Mucosa of descending colon (tissue), 3 donors: ENCODE measurements at regions of chr7 and their contacts with region 1.

Region 1: DNA sequence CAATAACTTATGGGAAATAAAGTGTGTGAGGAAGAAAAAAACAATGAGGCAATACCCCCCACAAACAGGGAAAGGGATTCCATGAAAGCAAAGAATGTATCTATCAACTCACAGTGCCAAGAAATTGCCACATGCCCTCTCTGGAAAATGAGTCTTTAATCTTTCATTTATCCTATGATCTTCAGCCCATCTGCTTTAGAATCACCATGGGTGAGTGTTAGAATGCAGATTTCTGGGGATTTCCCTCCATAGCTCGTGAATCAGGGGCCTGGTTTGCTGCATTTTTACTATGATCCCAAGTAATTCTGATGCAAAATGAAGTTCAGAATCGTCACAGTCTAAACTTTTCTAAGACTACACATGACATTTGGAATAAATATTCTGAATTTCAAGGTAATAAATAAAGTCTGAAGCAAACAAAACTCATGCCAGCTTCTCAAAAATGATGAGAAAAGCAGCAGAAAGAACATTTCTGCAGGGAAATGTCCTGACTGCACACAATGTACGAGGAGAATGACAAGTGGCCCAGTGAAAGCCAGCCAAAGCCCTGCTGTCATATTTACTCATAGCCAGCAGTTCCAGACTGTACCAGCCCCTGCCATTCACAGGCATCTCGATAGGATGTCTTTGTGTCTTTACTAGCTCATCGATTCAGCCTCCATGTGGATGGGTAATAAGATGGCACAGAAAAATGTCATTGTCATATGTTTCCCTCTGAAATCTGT is 167.1 kb downstream of the ELMO1 start:
- DNase-seq: no peak
- ATAC-seq: no peak
- H3K4me3 ChIP-seq: no peak overlapping the region
- H3K4me1 ChIP-seq: no peaks in the 10 kb centered on the region
- CTCF ChIP-seq: no peak

Region 2: GRCh38 chr7:37113661-37114355 is 167.7 kb before region 1 on chr7:
- intact Hi-C with region 1: no loop called
- DNase-seq: no peak
- ATAC-seq: no peak
- H3K4me3 ChIP-seq: no peak overlapping the region
- H3K4me1 ChIP-seq: no peaks in the 10 kb centered on the region
- CTCF ChIP-seq: no peak

Region 3: DNA sequence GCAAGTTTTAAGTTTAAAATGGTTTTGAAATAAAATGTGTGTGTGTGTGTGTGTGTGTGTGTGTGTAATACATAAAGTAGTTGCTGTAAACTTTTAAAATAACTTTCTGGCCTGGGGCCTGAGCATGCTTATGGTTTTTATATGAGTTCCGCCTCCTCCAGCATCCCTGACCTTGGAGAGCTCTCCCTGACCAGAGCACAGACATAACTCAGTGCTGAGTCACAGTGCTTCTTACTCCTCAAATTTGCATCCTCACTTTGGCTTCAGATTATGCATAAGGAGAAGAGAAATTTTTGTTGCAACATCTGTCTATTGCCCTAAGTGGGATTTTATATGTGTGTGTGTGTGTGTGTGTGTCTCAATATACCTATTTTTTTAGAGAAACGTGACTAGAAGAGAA is 33.7 kb before region 1 on chr7:
- intact Hi-C with region 1: loop called in 1 of 2 experiments (anchors 2 kb)
- DNase-seq: no peak
- ATAC-seq: peak; percentile 34
- H3K4me3 ChIP-seq: no peak overlapping the region
- H3K4me1 ChIP-seq: no peaks in the 10 kb centered on the region
- CTCF ChIP-seq: no peak